ENCODE measurements at regions of chr20 and their contacts with region 1.

Region 1: GRCh38 chr20:50516180-50516934 is 6.2 kb downstream of the PTPN1 start:
- DNase-seq: no peak
- ATAC-seq: peak; percentile 9
- H3K4me3 Mint-ChIP-seq: peak overlapping the region; percentile 72
- H3K27ac Mint-ChIP-seq: peak overlapping the region; percentile 91
- H3K4me1 Mint-ChIP-seq: peaks cover 93% of the 10 kb centered on the region
- H3K27me3 Mint-ChIP-seq: no peaks in the 10 kb centered on the region

Region 2: DNA sequence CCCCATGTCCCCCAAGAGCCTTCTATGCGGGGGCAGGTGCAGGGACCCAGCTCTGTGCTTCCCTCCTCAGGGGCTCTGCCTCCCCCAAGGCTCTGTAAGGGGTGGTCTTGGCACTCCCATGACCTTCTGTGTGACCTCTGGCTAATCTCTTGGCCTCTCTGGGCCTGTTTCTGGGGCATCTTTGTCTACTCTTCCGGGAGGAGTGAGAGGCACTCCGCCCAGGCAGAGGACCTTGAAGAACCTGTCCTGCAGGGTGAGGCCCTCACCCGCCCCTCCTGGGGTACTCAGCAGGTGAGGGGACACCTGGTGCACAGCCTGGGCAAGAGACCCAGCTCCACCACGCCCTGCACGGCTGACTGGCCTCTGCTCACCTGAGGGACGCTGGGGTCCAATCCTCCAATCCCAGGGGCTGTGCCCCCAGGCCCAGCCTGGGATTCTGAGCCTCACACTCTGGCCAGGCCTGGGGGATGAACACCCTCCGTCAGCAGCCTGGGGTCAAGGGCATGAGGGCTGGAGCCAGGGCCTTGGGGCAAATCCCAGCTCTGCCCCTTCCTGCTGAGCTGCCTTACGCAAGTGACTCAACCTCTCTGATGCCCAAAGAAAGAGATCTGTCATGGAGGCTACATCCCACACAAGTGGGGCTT is 156.2 kb before region 1 on chr20:
- CTCF ChIA-PET with region 1: no interaction called
- POLR2A ChIA-PET with region 1: no interaction called
- DNase-seq: no peak
- ATAC-seq: no peak
- H3K4me3 Mint-ChIP-seq: no peak overlapping the region
- H3K27ac Mint-ChIP-seq: no peak overlapping the region
- H3K4me1 Mint-ChIP-seq: peaks cover 5% of the 10 kb centered on the region
- H3K27me3 Mint-ChIP-seq: peaks cover 8% of the 10 kb centered on the region

Region 3: GRCh38 chr20:50478162-50479036 is 38.0 kb before region 1 on chr20:
- CTCF ChIA-PET with region 1: interaction called, 38 read pairs
- POLR2A ChIA-PET with region 1: interaction called, 12 read pairs
- DNase-seq: peak; percentile 86
- ATAC-seq: peak; percentile 100
- H3K4me3 Mint-ChIP-seq: no peak overlapping the region
- H3K27ac Mint-ChIP-seq: no peak overlapping the region
- H3K4me1 Mint-ChIP-seq: peaks cover 36% of the 10 kb centered on the region
- H3K27me3 Mint-ChIP-seq: peaks cover 2% of the 10 kb centered on the region

Region 4: GRCh38 chr20:50484276-50484976 is 31.9 kb before region 1 on chr20:
- CTCF ChIA-PET with region 1: interaction called, 38 read pairs
- POLR2A ChIA-PET with region 1: interaction called, 12 read pairs
- DNase-seq: no peak
- ATAC-seq: no peak
- H3K4me3 Mint-ChIP-seq: peak overlapping the region; percentile 81
- H3K27ac Mint-ChIP-seq: peak overlapping the region; percentile 94
- H3K4me1 Mint-ChIP-seq: peaks cover 46% of the 10 kb centered on the region
- H3K27me3 Mint-ChIP-seq: no peaks in the 10 kb centered on the region

Region 5: GRCh38 chr20:50504231-50504823 is 12.0 kb before region 1 on chr20:
- CTCF ChIA-PET with region 1: interaction called, 12 read pairs
- POLR2A ChIA-PET with region 1: interaction called, 13 read pairs
- DNase-seq: no peak
- ATAC-seq: no peak
- H3K4me3 Mint-ChIP-seq: no peak overlapping the region
- H3K27ac Mint-ChIP-seq: no peak overlapping the region
- H3K4me1 Mint-ChIP-seq: peaks cover 18% of the 10 kb centered on the region
- H3K27me3 Mint-ChIP-seq: no peaks in the 10 kb centered on the region

Region 6: DNA sequence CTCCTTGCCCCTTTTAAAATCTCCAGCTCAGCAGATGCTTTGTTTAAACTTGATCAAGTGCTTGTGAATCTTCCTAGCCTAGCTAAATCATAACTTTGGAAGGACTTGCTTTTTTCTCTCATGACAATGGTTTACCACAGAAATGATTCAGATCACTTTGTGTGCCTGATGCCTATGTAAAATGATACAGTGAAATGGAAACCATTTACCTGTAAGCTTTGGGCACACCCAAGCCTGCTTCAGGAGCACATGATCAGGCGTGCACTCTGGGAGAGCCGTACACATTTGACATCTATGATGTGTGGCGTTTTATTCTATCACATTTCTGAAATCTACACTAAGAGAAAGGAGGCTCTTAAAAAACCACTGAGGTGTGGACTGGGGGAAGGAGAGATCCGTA is 34.9 kb after region 1 on chr20:
- CTCF ChIA-PET with region 1: interaction called, 14 read pairs
- POLR2A ChIA-PET with region 1: no interaction called
- DNase-seq: no peak
- ATAC-seq: peak; percentile 47
- H3K4me3 Mint-ChIP-seq: no peak overlapping the region
- H3K27ac Mint-ChIP-seq: peak overlapping the region; percentile 23
- H3K4me1 Mint-ChIP-seq: peaks cover 22% of the 10 kb centered on the region
- H3K27me3 Mint-ChIP-seq: no peaks in the 10 kb centered on the region

Region 7: GRCh38 chr20:50824193-50824632 is 307.9 kb after region 1 on chr20:
- CTCF ChIA-PET with region 1: no interaction called
- POLR2A ChIA-PET with region 1: no interaction called
- DNase-seq: no peak
- ATAC-seq: no peak
- H3K4me3 Mint-ChIP-seq: no peak overlapping the region
- H3K27ac Mint-ChIP-seq: no peak overlapping the region
- H3K4me1 Mint-ChIP-seq: peaks cover 32% of the 10 kb centered on the region
- H3K27me3 Mint-ChIP-seq: no peaks in the 10 kb centered on the region

Measured in activated CD8-positive, alpha-beta T cell treated with anti-CD3 and anti-CD28 coated beads, Interleukin-2, amount 10 ng/mL, durations not matched to agents 7 days and 5 days (primary cell).